ENCODE measurements at regions of chr17 and their contacts with region 1.

Region 1: GRCh38 chr17:2380226-2380922 is 20.5 kb downstream of the MNT start:
- DNase-seq: peak in 1 of 5 donors; percentile 41
- H3K4me3 ChIP-seq: no peak overlapping the region
- H3K4me3 Mint-ChIP-seq: no peak overlapping the region
- H3K27ac ChIP-seq: no peak overlapping the region
- H3K27ac Mint-ChIP-seq: peak overlapping the region in 1 of 7 donors; percentile 44
- H3K4me1 ChIP-seq: peaks cover 4% of the 10 kb centered on the region
- H3K4me1 Mint-ChIP-seq: peaks cover 3 to 15% (median 5%) of the 10 kb centered on the region in 4 donors
- H3K27me3 ChIP-seq: no peaks in the 10 kb centered on the region
- H3K27me3 Mint-ChIP-seq: no peaks in the 10 kb centered on the region

Region 2: GRCh38 chr17:2392252-2393173 is 12.1 kb after region 1 on chr17:
- CTCF ChIA-PET with region 1: interaction called, 40 read pairs
- POLR2A ChIA-PET with region 1: interaction called, 48 read pairs
- intact Hi-C with region 1: no loop called
- DNase-seq: peak; percentile 95 to 99 (median 98)
- H3K4me3 ChIP-seq: peak overlapping the region; percentile 38 to 91
- H3K4me3 Mint-ChIP-seq: peak overlapping the region; percentile 88 to 98 (median 96)
- H3K27ac ChIP-seq: peak overlapping the region; percentile 100
- H3K27ac Mint-ChIP-seq: peak overlapping the region; percentile 95 to 100 (median 99)
- H3K4me1 ChIP-seq: peaks cover 60% of the 10 kb centered on the region
- H3K4me1 Mint-ChIP-seq: peaks cover 31 to 69% (median 49%) of the 10 kb centered on the region in 4 donors
- H3K27me3 ChIP-seq: no peaks in the 10 kb centered on the region
- H3K27me3 Mint-ChIP-seq: peaks cover 0 to 1% of the 10 kb centered on the region in 2 donors

Region 3: DNA sequence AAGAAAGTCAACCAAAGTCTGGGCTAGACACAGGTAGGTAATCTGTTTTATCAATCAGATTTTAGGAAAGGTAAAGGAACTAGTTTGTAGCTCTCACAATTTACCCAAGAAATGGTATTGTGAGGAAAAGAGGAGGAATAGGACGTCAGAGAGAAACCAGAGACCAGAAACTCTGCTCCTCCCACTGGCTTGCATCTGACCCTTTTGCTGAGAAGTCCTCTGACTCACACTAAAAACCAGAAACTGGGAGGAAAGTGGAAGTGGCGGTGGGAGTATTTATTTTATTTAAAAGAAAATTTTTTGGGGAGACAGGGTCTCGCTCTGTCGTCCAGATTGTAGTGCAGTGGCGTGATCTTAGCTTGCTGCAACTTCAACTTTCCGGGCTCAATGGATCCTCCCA is 58.4 kb after region 1 on chr17:
- CTCF ChIA-PET with region 1: interaction called, 10 read pairs
- POLR2A ChIA-PET with region 1: interaction called, 3 read pairs
- intact Hi-C with region 1: no loop called
- DNase-seq: no peak
- H3K4me3 ChIP-seq: no peak overlapping the region
- H3K4me3 Mint-ChIP-seq: no peak overlapping the region
- H3K27ac ChIP-seq: no peak overlapping the region
- H3K27ac Mint-ChIP-seq: peak overlapping the region in 1 of 7 donors; percentile 12
- H3K4me1 ChIP-seq: no peaks in the 10 kb centered on the region
- H3K4me1 Mint-ChIP-seq: peaks cover 0 to 4% (median 2%) of the 10 kb centered on the region in 4 donors
- H3K27me3 ChIP-seq: no peaks in the 10 kb centered on the region
- H3K27me3 Mint-ChIP-seq: no peaks in the 10 kb centered on the region

Region 4: GRCh38 chr17:2500446-2500845 is 120.1 kb after region 1 on chr17:
- CTCF ChIA-PET with region 1: no interaction called
- POLR2A ChIA-PET with region 1: no interaction called
- intact Hi-C with region 1: no loop called
- DNase-seq: no peak
- H3K4me3 ChIP-seq: no peak overlapping the region
- H3K4me3 Mint-ChIP-seq: no peak overlapping the region
- H3K27ac ChIP-seq: no peak overlapping the region
- H3K27ac Mint-ChIP-seq: no peak overlapping the region
- H3K4me1 ChIP-seq: peaks cover 5% of the 10 kb centered on the region
- H3K4me1 Mint-ChIP-seq: peaks cover 12 to 18% (median 16%) of the 10 kb centered on the region in 4 donors
- H3K27me3 ChIP-seq: no peaks in the 10 kb centered on the region
- H3K27me3 Mint-ChIP-seq: no peaks in the 10 kb centered on the region

Region 5: GRCh38 chr17:2613089-2613808 is 232.9 kb after region 1 on chr17:
- CTCF ChIA-PET with region 1: no interaction called
- POLR2A ChIA-PET with region 1: no interaction called
- intact Hi-C with region 1: no loop called
- DNase-seq: no peak
- H3K4me3 ChIP-seq: no peak overlapping the region
- H3K4me3 Mint-ChIP-seq: no peak overlapping the region
- H3K27ac ChIP-seq: no peak overlapping the region
- H3K27ac Mint-ChIP-seq: no peak overlapping the region
- H3K4me1 ChIP-seq: peaks cover 84% of the 10 kb centered on the region
- H3K4me1 Mint-ChIP-seq: peaks cover 49 to 86% (median 66%) of the 10 kb centered on the region in 4 donors
- H3K27me3 ChIP-seq: no peaks in the 10 kb centered on the region
- H3K27me3 Mint-ChIP-seq: no peaks in the 10 kb centered on the region

Measured in CD4-positive, alpha-beta memory T cell (primary cell).